Left cardiac atrium (tissue), 4 donors: ENCODE measurements at regions of chr2 and their contacts with region 1.

Region 1: GRCh38 chr2:39059366-39059952 is 61.4 kb downstream of the SOS1 start:
- DNase-seq: no peak
- ATAC-seq: no peak

Region 2: DNA sequence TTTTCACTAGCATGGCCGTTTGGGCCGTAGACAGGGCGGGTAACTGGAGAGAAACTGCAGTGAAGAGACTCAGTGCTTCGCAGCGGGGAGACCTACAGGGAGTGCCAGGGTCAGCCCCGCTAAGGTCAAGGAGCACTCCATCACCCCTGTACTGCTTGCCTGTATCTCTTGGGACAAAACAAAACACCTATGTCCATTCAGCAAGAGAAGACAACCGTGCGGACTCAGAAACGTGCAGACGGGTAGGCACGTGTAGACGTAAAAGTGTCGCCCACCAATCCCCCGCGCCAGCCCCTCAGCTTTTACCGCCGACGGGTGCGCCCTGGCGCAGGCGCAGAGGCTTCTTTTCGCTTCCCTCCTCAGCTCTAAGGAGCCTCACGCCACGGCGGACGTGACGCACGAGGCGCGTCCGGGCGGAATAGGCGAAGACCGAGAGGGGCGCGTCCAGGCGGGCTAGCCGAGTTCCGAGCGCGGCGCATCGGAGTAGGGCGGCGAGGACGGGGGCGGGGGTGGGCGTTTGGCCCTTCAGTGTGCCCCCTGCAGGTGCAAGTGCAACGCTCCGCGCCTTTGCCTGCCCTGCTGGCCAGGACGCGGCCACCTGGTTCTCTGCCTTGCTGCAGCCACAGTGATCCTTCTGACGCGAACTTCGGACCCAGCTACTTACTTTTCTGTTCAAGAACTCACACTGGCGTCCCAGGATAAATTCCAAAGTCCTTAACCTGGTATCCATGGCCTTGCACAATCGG is 64.7 kb after region 1 on chr2:
- intact Hi-C with region 1: loop called in 1 of 2 experiments (anchors 5 kb)
- DNase-seq: peak; percentile 97
- ATAC-seq: peak; percentile 90 to 94